A673 (cell line): ENCODE measurements at regions of chr21 and their contacts with region 1.

Region 1: GRCh38 chr21:41283211-41283818 is 33.3 kb upstream of the FAM3B start:
- DNase-seq: peak; percentile 70
- H3K4me3 ChIP-seq: no peak overlapping the region
- H3K27ac ChIP-seq: no peak overlapping the region
- H3K4me1 ChIP-seq: no peaks in the 10 kb centered on the region
- H3K27me3 ChIP-seq: peaks cover 4% of the 10 kb centered on the region
- CTCF ChIP-seq: peak; percentile 75

Region 2: DNA sequence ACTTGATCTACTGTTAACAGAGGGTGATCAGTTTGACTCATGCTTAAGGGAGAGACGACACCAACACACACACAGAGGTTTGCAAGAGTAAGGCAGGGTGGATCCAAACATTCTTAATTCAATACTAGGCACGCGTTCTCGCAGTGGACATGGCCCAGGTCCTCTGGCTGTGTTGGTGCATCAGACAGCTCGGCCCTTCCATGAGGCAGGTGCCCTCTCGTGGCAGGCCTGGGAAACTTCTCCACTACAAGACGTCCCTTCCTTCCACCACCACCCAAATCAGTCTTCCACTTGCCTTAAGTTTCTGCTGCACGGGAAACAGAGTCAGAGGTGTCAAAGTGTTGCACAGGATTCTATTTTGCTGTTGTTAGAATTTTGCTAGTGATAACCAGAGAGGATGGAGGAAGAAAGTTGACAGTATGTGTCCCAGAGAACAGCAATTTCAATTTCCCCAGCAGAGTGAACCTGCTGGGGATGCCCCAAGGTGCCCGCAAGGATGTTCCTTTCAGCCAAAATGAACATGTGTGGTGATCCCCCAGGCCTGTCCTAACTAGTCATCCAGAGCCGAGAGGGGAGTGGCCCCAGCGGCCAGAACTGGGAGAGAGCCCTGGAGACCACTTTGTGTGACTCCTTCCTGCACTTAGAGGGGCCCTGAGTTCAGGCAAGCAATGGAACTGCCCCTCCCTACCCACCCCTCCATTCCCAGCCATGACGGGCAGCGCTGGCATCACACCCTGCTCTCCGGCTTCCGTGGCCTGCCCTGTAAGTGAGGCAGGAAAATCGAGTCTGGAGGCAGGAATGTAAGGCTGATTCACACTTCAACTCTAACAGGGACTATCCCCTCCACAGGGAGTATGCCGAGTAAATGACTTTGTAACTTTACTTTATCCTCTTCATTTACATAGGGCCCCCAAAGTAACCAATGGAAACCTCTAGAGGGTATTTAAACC is 177.5 kb after region 1 on chr21:
- CTCF ChIA-PET with region 1: interaction called, 10 read pairs
- POLR2A ChIA-PET with region 1: no interaction called
- intact Hi-C with region 1: loop called (anchors 2 kb)
- DNase-seq: peak; percentile 55
- H3K4me3 ChIP-seq: no peak overlapping the region
- H3K27ac ChIP-seq: no peak overlapping the region
- H3K4me1 ChIP-seq: no peaks in the 10 kb centered on the region
- H3K27me3 ChIP-seq: no peaks in the 10 kb centered on the region
- CTCF ChIP-seq: peak; percentile 71

Region 3: GRCh38 chr21:41777951-41778874 is 494.9 kb after region 1 on chr21:
- CTCF ChIA-PET with region 1: no interaction called
- POLR2A ChIA-PET with region 1: no interaction called
- intact Hi-C with region 1: loop called (anchors 5 kb)
- DNase-seq: peak; percentile 93
- H3K4me3 ChIP-seq: peak overlapping the region; percentile 32
- H3K27ac ChIP-seq: peak overlapping the region; percentile 81
- H3K4me1 ChIP-seq: peaks cover 38% of the 10 kb centered on the region
- H3K27me3 ChIP-seq: no peaks in the 10 kb centered on the region
- CTCF ChIP-seq: peak; percentile 89

Region 4: DNA sequence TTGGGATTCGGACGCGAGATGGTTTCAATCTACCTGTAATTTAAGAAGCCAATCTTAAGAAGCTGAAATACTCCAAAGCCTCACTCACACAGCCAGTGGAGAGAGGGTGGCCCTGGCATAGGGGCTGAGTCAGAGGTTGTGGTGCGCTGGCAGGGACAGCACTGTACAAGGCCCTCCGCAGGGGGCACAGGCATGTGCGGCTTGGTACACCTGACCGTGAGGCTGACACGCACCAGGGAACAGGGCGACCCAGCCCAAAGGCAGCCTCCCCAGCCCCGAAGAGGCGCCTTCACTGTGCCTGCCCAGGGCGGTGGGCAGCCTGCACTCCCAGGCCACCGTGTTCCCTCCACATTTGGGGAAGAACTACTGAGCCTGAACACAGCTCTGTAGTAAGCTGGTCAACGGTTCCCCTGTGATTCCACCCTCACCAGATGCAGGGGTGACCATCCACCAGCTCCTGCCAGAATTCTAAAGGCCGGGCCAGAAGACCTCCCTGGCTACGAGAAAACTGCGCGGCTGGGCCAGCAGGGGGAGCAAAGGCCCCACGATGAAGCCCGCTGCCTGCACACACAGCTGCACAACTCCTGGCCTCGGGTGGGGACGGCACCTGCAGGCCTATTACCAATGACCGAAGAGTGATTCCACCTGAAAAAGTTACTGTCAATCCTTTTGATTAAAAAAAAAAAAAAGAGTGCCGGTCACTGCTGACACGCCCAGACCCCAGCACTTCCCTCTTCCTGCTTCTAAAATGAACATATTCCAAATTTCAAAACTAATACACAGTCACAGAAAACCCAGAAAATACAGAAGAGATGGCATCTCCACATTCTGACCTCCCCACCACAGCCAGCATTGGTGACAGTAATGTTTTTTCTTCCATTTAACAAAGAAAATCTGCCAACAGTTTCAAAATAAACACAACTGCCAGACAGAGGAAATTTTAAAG is 533.2 kb after region 1 on chr21:
- CTCF ChIA-PET with region 1: interaction called, 10 read pairs
- POLR2A ChIA-PET with region 1: no interaction called
- intact Hi-C with region 1: loop called (anchors 5 kb)
- DNase-seq: peak; percentile 66
- H3K4me3 ChIP-seq: no peak overlapping the region
- H3K27ac ChIP-seq: peak overlapping the region; percentile 56
- H3K4me1 ChIP-seq: peaks cover 19% of the 10 kb centered on the region
- H3K27me3 ChIP-seq: no peaks in the 10 kb centered on the region
- CTCF ChIP-seq: peak; percentile 87